ENCODE measurements at regions of chr4 and their contacts with region 1.

Region 1: GRCh38 chr4:26719954-26720552 is 136.2 kb downstream of the TBC1D19 start:
- DNase-seq: no peak
- H3K4me3 ChIP-seq: no peak overlapping the region
- H3K27ac ChIP-seq: no peak overlapping the region
- H3K4me1 ChIP-seq: no peaks in the 10 kb centered on the region
- H3K27me3 ChIP-seq: no peaks in the 10 kb centered on the region
- CTCF ChIP-seq: peak; percentile 74

Region 2: GRCh38 chr4:26192899-26193778 is 526.9 kb before region 1 on chr4:
- CTCF ChIA-PET with region 1: no interaction called
- POLR2A ChIA-PET with region 1: no interaction called
- intact Hi-C with region 1: no loop called
- DNase-seq: no peak
- H3K4me3 ChIP-seq: no peak overlapping the region
- H3K27ac ChIP-seq: no peak overlapping the region
- H3K4me1 ChIP-seq: peaks cover 19% of the 10 kb centered on the region
- H3K27me3 ChIP-seq: no peaks in the 10 kb centered on the region
- CTCF ChIP-seq: no peak

Region 3: DNA sequence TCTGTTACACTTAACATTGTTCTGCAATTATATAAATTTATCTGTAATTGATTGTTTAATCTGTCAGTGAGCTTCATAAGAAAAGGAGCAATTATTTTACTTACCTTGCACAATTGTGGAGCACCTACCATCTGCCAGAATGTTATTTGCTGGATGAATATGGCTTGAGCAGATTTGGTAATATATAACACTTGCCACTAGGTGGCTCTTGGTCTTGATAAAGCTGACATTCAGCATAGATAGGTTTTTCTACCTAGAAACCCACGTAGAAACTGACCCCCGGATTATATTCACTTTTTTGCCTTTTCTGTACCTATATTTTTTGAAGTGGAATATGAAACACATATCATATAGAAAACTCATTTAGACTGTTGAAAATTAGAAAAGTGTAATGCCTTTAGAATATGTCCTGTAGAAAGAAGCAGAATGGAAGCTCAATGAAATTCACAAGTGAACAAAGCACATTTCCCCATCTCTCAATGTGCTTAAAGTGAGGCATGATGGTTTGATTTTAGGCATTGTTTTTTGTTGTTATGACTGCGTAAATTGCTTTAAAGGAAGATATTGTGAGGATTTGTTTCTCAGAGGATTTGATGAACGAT is 389.8 kb before region 1 on chr4:
- CTCF ChIA-PET with region 1: no interaction called
- POLR2A ChIA-PET with region 1: no interaction called
- intact Hi-C with region 1: loop called (anchors 5 kb)
- DNase-seq: peak in 1 of 2 experiments; percentile 45
- H3K4me3 ChIP-seq: no peak overlapping the region
- H3K27ac ChIP-seq: no peak overlapping the region
- H3K4me1 ChIP-seq: 0 out of 2 replicates have a peak, but pooled peaks cover 3% of the 10 kb centered on the region
- H3K27me3 ChIP-seq: no peaks in the 10 kb centered on the region
- CTCF ChIP-seq: peak; percentile 80

Region 4: DNA sequence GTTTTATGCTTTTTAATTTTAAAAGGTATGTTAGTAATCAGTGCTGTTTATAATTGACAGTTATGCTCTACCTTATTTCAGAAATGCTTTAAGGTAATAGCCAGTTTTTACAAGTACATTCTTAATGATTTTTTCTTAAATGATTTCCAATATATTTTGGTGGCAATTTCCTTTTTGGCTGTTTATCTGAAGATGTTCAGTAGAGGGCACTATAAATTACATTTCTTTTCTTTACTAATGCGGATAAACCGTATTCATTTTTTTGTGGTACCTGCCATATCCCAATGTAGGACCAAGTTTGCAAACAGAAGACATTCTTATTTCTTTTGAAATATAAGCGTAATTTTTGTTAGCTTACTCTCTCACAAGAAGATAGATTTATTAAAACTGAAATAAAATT is 295.2 kb before region 1 on chr4:
- CTCF ChIA-PET with region 1: no interaction called
- POLR2A ChIA-PET with region 1: no interaction called
- intact Hi-C with region 1: loop called (anchors 10 kb)
- DNase-seq: no peak
- H3K4me3 ChIP-seq: no peak overlapping the region
- H3K27ac ChIP-seq: no peak overlapping the region
- H3K4me1 ChIP-seq: no peaks in the 10 kb centered on the region
- H3K27me3 ChIP-seq: no peaks in the 10 kb centered on the region
- CTCF ChIP-seq: no peak; the same call in 1 of the 2 replicates

Region 5: DNA sequence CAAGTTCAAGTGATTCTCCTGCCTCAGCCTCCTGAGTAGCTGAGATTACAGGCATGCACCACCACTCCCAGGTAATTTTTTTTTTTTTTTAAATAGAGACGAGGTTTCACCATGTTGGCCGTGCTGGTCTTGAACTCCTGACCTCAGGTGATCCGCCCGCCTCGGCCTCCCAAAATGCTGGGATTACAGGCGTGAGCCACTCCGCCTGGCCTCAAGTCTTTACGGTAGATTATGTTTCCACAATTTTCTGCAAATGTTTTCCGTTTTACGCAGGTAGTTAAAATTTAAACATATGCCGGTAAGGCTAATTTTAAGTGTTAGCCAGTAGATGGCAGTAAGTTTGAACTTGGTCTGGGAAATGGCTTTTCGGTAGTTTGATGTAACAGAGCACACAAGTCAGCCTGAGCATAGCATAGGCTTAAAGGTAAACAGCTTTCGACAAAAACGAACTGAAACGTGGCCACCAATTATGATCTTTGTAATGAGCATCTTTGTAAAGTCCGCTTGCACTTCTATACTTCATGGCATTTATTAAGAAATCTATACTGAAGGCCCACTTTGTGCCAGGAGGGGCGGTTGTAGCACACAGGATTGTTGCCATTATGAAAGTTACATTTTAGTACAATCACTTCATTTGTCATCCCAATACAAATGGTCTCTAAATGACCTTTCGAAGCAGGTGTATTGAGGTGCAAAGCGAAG is 260.8 kb before region 1 on chr4:
- CTCF ChIA-PET with region 1: no interaction called
- POLR2A ChIA-PET with region 1: no interaction called
- intact Hi-C with region 1: loop called (anchors 1 kb)
- DNase-seq: peak; percentile 10 to 35
- H3K4me3 ChIP-seq: peak overlapping the region; percentile 32; the same call in 1 of the 2 replicates
- H3K27ac ChIP-seq: no peak overlapping the region
- H3K4me1 ChIP-seq: no peaks in the 10 kb centered on the region
- H3K27me3 ChIP-seq: no peaks in the 10 kb centered on the region
- CTCF ChIP-seq: peak; percentile 68

Region 6: DNA sequence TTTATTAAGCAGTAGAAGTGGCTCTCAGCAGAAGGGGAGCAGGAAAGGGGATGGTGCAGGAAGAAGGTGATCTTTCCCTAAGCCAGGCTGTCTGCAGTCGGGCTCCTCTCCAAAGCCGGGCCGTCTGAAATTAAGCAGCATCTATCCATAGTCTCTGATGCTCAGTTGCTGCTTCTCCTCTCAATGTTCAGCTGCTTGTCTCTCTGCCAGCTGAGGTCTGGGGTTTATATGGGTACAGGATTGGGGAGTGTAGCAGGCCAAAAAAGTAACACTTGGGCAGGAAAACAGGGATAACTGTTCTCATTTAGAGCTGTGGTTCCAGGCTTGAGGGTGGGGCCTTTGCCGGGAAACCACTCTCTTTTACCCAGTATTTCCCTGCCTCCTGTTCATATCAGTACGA is 190.6 kb before region 1 on chr4:
- CTCF ChIA-PET with region 1: no interaction called
- POLR2A ChIA-PET with region 1: no interaction called
- intact Hi-C with region 1: no loop called
- DNase-seq: no peak
- H3K4me3 ChIP-seq: no peak overlapping the region
- H3K27ac ChIP-seq: no peak overlapping the region
- H3K4me1 ChIP-seq: no peaks in the 10 kb centered on the region; the same call in 1 of the 2 replicates
- H3K27me3 ChIP-seq: no peaks in the 10 kb centered on the region
- CTCF ChIP-seq: no peak